ENCODE measurements at regions of chr3 and their contacts with region 1.

Region 1: GRCh38 chr3:101849721-101850245 is 469 bp downstream of the NFKBIZ start:
- DNase-seq: peak; percentile 41 to 90
- H3K4me3 ChIP-seq: peak overlapping the region; percentile 98
- CTCF ChIP-seq: no peak
- POLR2A ChIP-seq: no peak

Region 2: GRCh38 chr3:101803173-101803782 is 46.5 kb before region 1 on chr3:
- intact Hi-C with region 1: no loop called
- DNase-seq: peak in 1 of 2 donors; percentile 54
- H3K4me3 ChIP-seq: no peak overlapping the region
- CTCF ChIP-seq: no peak
- POLR2A ChIP-seq: no peak

Region 3: DNA sequence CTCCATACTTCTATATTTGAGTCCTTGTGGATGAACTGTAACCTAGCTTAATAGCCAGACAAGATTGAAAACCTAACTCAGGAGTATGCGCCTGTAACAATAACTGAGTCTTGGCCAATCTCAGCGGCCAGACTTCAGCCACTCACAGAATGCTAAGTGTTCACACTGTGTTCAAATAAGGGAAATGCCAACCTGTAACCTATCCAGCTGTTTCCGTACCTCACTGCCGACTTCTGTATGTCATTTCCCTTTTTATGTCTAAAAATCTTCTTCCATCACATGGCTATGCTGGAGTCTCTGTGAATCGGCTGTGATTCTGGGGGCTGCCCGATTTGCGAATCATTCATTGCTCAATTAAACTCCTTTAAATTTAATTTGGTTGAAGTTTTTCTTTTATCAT is 168.8 kb after region 1 on chr3:
- intact Hi-C with region 1: no loop called
- DNase-seq: no peak
- H3K4me3 ChIP-seq: no peak overlapping the region
- CTCF ChIP-seq: no peak
- POLR2A ChIP-seq: no peak

Region 4: GRCh38 chr3:102034639-102035451 is 185.1 kb after region 1 on chr3:
- intact Hi-C with region 1: no loop called
- DNase-seq: no peak
- H3K4me3 ChIP-seq: no peak overlapping the region
- CTCF ChIP-seq: no peak
- POLR2A ChIP-seq: no peak

Region 5: GRCh38 chr3:102195198-102195948 is 345.6 kb after region 1 on chr3:
- intact Hi-C with region 1: loop called (anchors 10 kb)
- DNase-seq: no peak
- H3K4me3 ChIP-seq: no peak overlapping the region
- CTCF ChIP-seq: no peak
- POLR2A ChIP-seq: no peak

Measured in lower leg skin (tissue), 4 donors.